Ascending aorta (tissue), 2 donors: ENCODE measurements at regions of chr3 and their contacts with region 1.

Region 1: DNA sequence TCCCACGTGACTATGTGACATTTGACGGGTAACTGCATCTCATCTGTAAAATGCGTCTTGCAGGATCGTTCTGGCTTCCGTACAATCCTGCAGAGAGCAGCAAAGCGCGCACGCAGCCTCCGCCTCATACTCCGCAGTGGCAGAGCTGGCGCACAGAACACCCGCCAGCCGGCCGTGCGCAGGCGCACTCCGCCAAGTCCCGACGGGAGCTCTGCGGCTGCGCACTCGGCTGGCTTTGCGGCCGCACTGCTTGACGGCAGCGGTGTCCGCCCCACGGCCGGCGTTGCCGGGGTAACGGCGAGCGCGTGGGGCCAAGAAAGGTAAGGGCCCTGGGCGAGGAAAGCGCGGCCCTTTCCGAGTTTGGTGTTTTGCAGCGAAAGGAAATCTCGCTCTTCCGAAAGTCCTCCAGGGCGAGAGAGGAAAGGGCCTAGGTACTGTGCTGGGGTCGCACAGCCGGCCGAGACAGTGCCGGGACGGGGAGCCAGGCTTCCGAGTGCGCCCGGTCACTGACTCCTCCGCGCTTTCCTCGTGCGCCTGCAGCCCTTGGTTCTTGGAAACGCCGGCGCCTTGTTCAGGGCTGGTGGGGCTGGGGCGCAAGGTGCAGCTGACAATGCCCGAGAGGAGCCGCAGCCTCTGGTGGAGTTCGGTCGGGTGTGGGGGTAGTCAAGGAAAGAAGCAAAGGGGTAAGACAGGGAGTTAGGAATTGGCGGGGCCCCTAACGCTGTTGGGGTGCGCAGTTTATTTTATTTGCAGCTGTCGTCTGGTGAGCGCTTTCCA is at the start of gene TSEN2:
- DNase-seq: peak; percentile 71 to 95
- H3K4me3 ChIP-seq: peak within 1 kb of the TSS; percentile 56 to 79
- H3K27ac ChIP-seq: peak within 1 kb of the TSS; percentile 42 to 46
- H3K4me1 ChIP-seq: peaks cover 8 to 10% of the 10 kb centered on the region in 2 donors
- H3K27me3 ChIP-seq: no peaks in the 10 kb centered on the region
- CTCF ChIP-seq: peak in 1 of 3 experiments; percentile 33
- total RNA-seq, gene TSEN2: 6.3 TPM

Region 2: DNA sequence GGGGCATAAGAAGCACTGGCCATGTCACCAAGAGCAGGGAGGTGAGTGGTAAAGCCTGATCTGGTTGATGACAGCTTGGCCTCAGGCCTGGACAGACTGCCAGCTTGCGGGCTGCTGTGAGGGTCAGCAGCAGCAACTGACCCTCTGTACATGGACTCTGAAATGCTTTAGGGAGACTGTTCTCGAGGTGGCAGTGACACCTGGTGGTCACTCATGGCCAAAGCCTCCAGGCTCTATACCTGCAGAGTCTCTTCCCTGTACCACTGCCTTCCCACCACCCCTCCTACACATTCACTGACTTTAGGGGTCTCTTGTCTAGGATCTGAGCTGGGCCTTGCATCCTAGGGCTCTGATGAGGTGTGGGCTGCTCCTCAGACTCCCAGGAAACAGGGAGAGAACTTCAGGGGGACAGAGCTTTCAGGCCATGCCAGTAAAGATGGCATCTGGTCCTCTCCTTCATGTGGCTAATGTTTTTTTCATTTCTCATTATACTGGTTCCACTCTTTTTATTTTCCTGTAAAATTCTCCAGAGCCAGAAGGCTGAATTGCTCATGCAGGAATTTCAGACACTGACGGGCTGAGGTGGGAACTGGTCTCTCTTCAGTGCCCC is 308.4 kb before region 1 on chr3:
- intact Hi-C with region 1: loop called (anchors 5 kb)
- DNase-seq: peak in 1 of 2 donors; percentile 82
- H3K4me3 ChIP-seq: no peak overlapping the region
- H3K27ac ChIP-seq: no peak overlapping the region
- H3K4me1 ChIP-seq: peaks cover 5 to 32% of the 10 kb centered on the region in 2 donors
- H3K27me3 ChIP-seq: no peaks in the 10 kb centered on the region
- CTCF ChIP-seq: peak; percentile 81 to 91 (median 84)

Region 3: GRCh38 chr3:12508291-12508700 is 23.9 kb after region 1 on chr3:
- intact Hi-C with region 1: loop called (anchors 2 kb)
- DNase-seq: peak; percentile 19 to 85
- H3K4me3 ChIP-seq: no peak overlapping the region
- H3K27ac ChIP-seq: peak overlapping the region; percentile 68 to 78
- H3K4me1 ChIP-seq: peaks cover 6 to 16% of the 10 kb centered on the region in 2 donors
- H3K27me3 ChIP-seq: no peaks in the 10 kb centered on the region
- CTCF ChIP-seq: no peak

Region 4: GRCh38 chr3:12841149-12841970 is 357.0 kb after region 1 on chr3 and contains the start of gene RPL32:
- intact Hi-C with region 1: loop called (anchors 5 kb)
- DNase-seq: peak; percentile 31 to 92
- H3K4me3 ChIP-seq: peak within 1 kb of the TSS; percentile 71 to 84
- H3K27ac ChIP-seq: peak within 1 kb of the TSS; percentile 91 to 95
- H3K4me1 ChIP-seq: peaks cover 0 to 19% of the 10 kb centered on the region in 2 donors
- H3K27me3 ChIP-seq: no peaks in the 10 kb centered on the region
- CTCF ChIP-seq: peak; percentile 74 to 82 (median 78)
- total RNA-seq, gene RPL32: 1,821 TPM

Region 5: GRCh38 chr3:13282986-13283876 is 798.8 kb after region 1 on chr3:
- intact Hi-C with region 1: no loop called
- DNase-seq: no peak
- H3K4me3 ChIP-seq: peak overlapping the region; percentile 61 to 64
- H3K27ac ChIP-seq: no peak overlapping the region
- H3K4me1 ChIP-seq: peaks cover 4 to 6% of the 10 kb centered on the region in 2 donors
- H3K27me3 ChIP-seq: peaks cover 4% of the 10 kb centered on the region
- CTCF ChIP-seq: peak in 1 of 3 experiments; percentile 44